SK-N-SH (cell line): ENCODE measurements at regions of chr2 and their contacts with region 1.

Region 1: GRCh38 chr2:222318026-222318711 is 19.4 kb upstream of the PAX3 start:
- DNase-seq: peak; percentile 84
- H3K4me3 ChIP-seq: peak overlapping the region; percentile 53 to 62
- H3K27ac ChIP-seq: no peak overlapping the region; a peak in 1 of 4 replicates
- H3K4me1 ChIP-seq: peaks cover 0 to 7% of the 10 kb centered on the region in 2 experiments; a peak in 3 of 4 replicates
- H3K27me3 ChIP-seq: peaks cover 37% of the 10 kb centered on the region
- CTCF ChIP-seq: peak; percentile 52
- EP300 ChIP-seq: no peak
- RAD21 ChIP-seq: peak; percentile 87

Region 2: DNA sequence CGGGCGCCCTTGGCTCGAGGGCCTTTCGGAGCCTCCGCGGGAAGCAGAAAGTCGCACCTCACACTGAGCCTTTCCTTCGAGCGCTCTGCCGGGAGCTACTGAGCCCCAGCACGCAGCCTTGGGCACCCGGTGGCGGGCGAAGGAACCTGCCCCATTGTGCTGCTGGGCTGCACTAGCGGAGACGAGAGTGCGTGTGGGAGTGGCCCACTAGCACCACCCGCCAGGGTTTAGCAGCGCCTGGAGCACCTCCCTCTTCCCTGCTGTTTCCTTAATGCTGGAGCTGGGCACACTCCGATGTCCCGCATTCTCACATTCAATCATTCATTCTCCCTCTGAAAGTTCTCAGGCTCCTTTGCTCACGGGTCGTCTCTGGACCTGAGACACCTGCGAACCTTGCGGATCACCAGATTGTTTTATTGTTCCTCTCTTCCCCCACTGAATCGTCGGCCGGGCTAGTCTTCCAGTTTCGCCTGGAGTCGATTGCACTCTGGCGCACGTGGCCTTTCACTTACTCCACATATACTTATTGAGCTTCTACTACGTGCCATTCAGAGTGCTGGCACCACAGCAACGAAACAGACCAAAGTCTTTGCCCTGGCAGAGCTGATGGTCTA is 10.9 kb before region 1 on chr2:
- CTCF ChIA-PET with region 1: interaction called, 13 read pairs
- POLR2A ChIA-PET with region 1: no interaction called
- DNase-seq: no peak
- H3K4me3 ChIP-seq: no peak overlapping the region
- H3K27ac ChIP-seq: no peak overlapping the region
- H3K4me1 ChIP-seq: peaks cover 10 to 11% of the 10 kb centered on the region in 2 experiments; a peak in 3 of 4 replicates
- H3K27me3 ChIP-seq: peaks cover 100% of the 10 kb centered on the region
- CTCF ChIP-seq: no peak
- EP300 ChIP-seq: no peak
- RAD21 ChIP-seq: no peak

Region 3: GRCh38 chr2:222399038-222399783 is 81.0 kb after region 1 on chr2:
- CTCF ChIA-PET with region 1: interaction called, 3 read pairs
- POLR2A ChIA-PET with region 1: interaction called, 11 read pairs
- DNase-seq: peak; percentile 32
- H3K4me3 ChIP-seq: no peak overlapping the region
- H3K27ac ChIP-seq: no peak overlapping the region; a peak in 1 of 4 replicates
- H3K4me1 ChIP-seq: peaks cover 0 to 4% of the 10 kb centered on the region in 2 experiments; a peak in 2 of 4 replicates
- H3K27me3 ChIP-seq: no peaks in the 10 kb centered on the region
- CTCF ChIP-seq: no peak
- EP300 ChIP-seq: peak in 1 of 2 experiments; percentile 67; a peak in 1 of 4 replicates
- RAD21 ChIP-seq: peak; percentile 19; the same call in 1 of the 2 replicates

Region 4: GRCh38 chr2:222483513-222484039 is 165.4 kb after region 1 on chr2:
- CTCF ChIA-PET with region 1: interaction called, 42 read pairs
- POLR2A ChIA-PET with region 1: interaction called, 3 read pairs
- DNase-seq: no peak
- H3K4me3 ChIP-seq: no peak overlapping the region
- H3K27ac ChIP-seq: no peak overlapping the region
- H3K4me1 ChIP-seq: no peaks in the 10 kb centered on the region
- H3K27me3 ChIP-seq: no peaks in the 10 kb centered on the region
- CTCF ChIP-seq: no peak
- EP300 ChIP-seq: no peak
- RAD21 ChIP-seq: peak; percentile 66

Region 5: GRCh38 chr2:222561817-222562645 is 243.9 kb after region 1 on chr2:
- CTCF ChIA-PET with region 1: interaction called, 93 read pairs
- POLR2A ChIA-PET with region 1: no interaction called
- DNase-seq: peak; percentile 63
- H3K4me3 ChIP-seq: no peak overlapping the region
- H3K27ac ChIP-seq: no peak overlapping the region
- H3K4me1 ChIP-seq: no peaks in the 10 kb centered on the region
- H3K27me3 ChIP-seq: no peaks in the 10 kb centered on the region
- CTCF ChIP-seq: peak; percentile 65
- EP300 ChIP-seq: no peak
- RAD21 ChIP-seq: peak; percentile 83

Region 6: GRCh38 chr2:222613715-222614331 is 295.7 kb after region 1 on chr2:
- CTCF ChIA-PET with region 1: interaction called, 21 read pairs
- POLR2A ChIA-PET with region 1: no interaction called
- DNase-seq: peak; percentile 70
- H3K4me3 ChIP-seq: no peak overlapping the region; a peak in 1 of 4 replicates
- H3K27ac ChIP-seq: no peak overlapping the region
- H3K4me1 ChIP-seq: peaks cover 0 to 8% of the 10 kb centered on the region in 2 experiments; a peak in 2 of 4 replicates
- H3K27me3 ChIP-seq: no peaks in the 10 kb centered on the region
- CTCF ChIP-seq: peak; percentile 85
- EP300 ChIP-seq: no peak
- RAD21 ChIP-seq: peak; percentile 91

Region 7: GRCh38 chr2:222842491-222843174 is 524.5 kb after region 1 on chr2:
- CTCF ChIA-PET with region 1: no interaction called
- POLR2A ChIA-PET with region 1: no interaction called
- DNase-seq: no peak
- H3K4me3 ChIP-seq: no peak overlapping the region
- H3K27ac ChIP-seq: peak overlapping the region; percentile 7 to 60; a peak in 2 of 4 replicates
- H3K4me1 ChIP-seq: 0 out of 4 replicates have a peak, but pooled peaks cover 0 to 10% of the 10 kb centered on the region in 2 experiments
- H3K27me3 ChIP-seq: no peaks in the 10 kb centered on the region
- CTCF ChIP-seq: no peak
- EP300 ChIP-seq: no peak
- RAD21 ChIP-seq: no peak